ENCODE measurements at regions of chr19 and their contacts with region 1.

Region 1: GRCh38 chr19:47243776-47244547 is 12.4 kb upstream of the CCDC9 start:
- DNase-seq: peak; percentile 90 to 94
- ATAC-seq: peak; percentile 60 to 88 (median 73)
- H3K4me3 ChIP-seq: peak overlapping the region; percentile 1
- H3K4me3 Mint-ChIP-seq: peak overlapping the region; percentile 80
- H3K27ac ChIP-seq: peak overlapping the region; percentile 60
- H3K27ac Mint-ChIP-seq: no peak overlapping the region
- H3K4me1 ChIP-seq: peaks cover 50% of the 10 kb centered on the region
- H3K4me1 Mint-ChIP-seq: peaks cover 3 to 8% of the 10 kb centered on the region in 2 donors
- H3K27me3 ChIP-seq: peaks cover 14% of the 10 kb centered on the region
- H3K27me3 Mint-ChIP-seq: peaks cover 0 to 12% of the 10 kb centered on the region in 2 donors
- CTCF ChIP-seq: peak; percentile 97

Region 2: DNA sequence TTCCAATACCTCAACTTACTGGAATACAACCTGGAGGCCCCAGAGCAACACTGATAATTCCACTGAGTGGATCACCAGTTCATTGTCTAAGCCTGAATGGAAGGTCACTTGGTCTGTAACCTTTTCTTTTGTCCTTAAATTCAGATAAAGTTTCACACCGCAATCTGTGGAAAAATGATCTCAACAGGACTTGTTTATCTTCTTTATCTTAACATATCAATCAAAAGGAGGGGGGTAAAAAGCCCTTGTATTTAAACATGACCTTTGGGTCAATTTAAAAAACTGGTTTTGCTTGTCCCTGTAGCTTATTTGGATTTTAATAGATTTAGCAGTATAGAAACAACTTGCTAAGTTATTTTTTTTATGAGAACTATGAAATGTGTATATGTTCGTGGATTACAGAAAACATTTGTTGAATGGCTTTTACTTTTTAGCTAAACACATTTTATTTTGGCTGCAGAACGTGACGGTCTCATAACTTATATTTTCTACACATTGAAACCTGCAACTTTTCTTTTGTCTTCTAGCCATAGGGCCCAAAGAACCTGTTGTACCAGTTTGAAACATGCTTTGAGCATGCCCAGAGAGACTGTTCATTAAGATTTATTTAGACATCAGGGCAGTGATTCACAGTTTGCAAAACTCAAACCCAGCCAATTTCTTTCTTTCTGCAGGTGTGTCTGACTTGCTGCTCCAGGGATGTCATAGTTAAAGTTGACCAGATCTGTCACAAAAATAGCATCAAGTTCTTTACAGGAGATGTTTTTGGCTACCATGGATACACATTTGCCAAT is 91.5 kb before region 1 on chr19:
- intact Hi-C with region 1: loop called (anchors 1 kb)
- DNase-seq: no peak
- ATAC-seq: no peak
- H3K4me3 ChIP-seq: no peak overlapping the region
- H3K4me3 Mint-ChIP-seq: no peak overlapping the region
- H3K27ac ChIP-seq: no peak overlapping the region
- H3K27ac Mint-ChIP-seq: no peak overlapping the region
- H3K4me1 ChIP-seq: peaks cover 29% of the 10 kb centered on the region
- H3K4me1 Mint-ChIP-seq: peaks cover 17 to 18% of the 10 kb centered on the region in 2 donors
- H3K27me3 ChIP-seq: no peaks in the 10 kb centered on the region
- H3K27me3 Mint-ChIP-seq: no peaks in the 10 kb centered on the region
- CTCF ChIP-seq: no peak

Region 3: DNA sequence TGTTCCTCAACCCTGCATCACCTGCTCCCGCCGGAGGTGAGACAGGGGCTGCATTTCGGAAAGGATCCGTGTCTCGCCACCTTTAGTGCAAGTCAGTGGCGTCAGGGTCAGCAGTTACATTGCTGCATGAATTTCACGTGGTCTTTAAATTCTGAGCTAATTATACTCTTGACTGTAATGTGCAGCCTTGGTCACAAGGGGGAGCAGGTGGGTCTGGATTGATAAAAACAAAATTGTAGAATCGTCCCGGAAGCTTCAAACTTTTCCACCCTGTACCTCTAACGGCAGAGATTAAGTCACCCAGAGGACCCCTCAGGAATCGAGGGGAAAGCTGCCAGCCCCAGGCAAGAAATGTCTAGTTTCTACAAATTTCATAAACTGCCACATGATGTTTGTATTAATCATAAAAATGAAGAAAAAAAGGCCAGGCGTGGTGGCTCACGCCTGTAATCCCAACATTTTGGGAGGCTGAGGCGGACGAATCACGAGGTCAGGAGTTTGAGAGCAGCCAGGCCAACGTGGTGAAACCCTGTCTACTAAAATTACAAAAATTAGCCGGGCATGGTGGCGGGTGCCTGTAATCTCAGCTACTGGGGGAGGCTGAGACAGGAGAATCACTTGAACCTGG is 33.2 kb before region 1 on chr19:
- intact Hi-C with region 1: loop called (anchors 1 kb)
- DNase-seq: peak; percentile 71 to 90
- ATAC-seq: peak; percentile 89 to 99 (median 93)
- H3K4me3 ChIP-seq: no peak overlapping the region
- H3K4me3 Mint-ChIP-seq: peak overlapping the region; percentile 29
- H3K27ac ChIP-seq: no peak overlapping the region
- H3K27ac Mint-ChIP-seq: peak overlapping the region; percentile 75 to 83
- H3K4me1 ChIP-seq: peaks cover 9% of the 10 kb centered on the region
- H3K4me1 Mint-ChIP-seq: peaks cover 7 to 8% of the 10 kb centered on the region in 2 donors
- H3K27me3 ChIP-seq: no peaks in the 10 kb centered on the region
- H3K27me3 Mint-ChIP-seq: no peaks in the 10 kb centered on the region
- CTCF ChIP-seq: peak; percentile 89

Region 4: DNA sequence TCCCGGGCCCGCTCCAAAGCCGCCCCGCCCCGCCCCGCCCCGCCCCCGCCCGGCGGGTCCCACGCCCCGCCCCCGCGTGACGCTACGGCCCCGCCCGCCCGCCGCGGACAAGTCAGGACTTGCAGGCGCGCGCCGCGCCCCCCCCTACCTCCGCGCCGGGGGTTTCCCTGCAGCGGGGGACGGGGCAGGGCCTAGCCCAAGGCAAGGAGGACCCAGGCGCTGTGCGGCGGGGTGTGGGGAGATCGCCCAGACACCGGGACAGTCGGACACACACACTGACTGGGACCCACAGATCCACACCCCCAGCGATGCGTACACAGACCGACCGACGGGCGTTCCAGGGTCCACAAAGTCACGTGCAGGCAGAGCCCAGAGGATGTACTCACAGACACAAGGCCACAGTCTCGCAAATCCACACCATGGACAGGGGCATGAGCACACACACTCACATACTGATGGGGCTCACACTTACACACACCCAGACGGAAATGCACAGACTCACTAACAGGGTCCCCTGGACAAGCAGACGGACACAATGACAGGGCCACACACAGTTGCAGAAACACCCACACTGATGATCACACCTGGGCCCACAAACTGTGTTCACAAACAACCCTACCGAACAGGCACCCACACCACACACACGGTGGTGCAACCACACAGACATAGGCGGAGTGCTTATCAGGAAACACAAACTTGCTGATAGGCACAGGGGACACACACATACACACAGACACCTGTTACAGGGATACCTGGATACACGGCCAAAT is 12.6 kb before region 1 on chr19:
- intact Hi-C with region 1: loop called (anchors 1 kb)
- DNase-seq: peak; percentile 93
- ATAC-seq: peak; percentile 58 to 83 (median 70)
- H3K4me3 ChIP-seq: peak overlapping the region; percentile 59
- H3K4me3 Mint-ChIP-seq: peak overlapping the region; percentile 81
- H3K27ac ChIP-seq: peak overlapping the region; percentile 94
- H3K27ac Mint-ChIP-seq: peak overlapping the region; percentile 88 to 93
- H3K4me1 ChIP-seq: peaks cover 52% of the 10 kb centered on the region
- H3K4me1 Mint-ChIP-seq: peaks cover 18 to 28% of the 10 kb centered on the region in 2 donors
- H3K27me3 ChIP-seq: no peaks in the 10 kb centered on the region
- H3K27me3 Mint-ChIP-seq: peaks cover 0 to 2% of the 10 kb centered on the region in 2 donors
- CTCF ChIP-seq: no peak